ENCODE measurements at regions of chr2 and their contacts with region 1.

Region 1: GRCh38 chr2:222973237-222973636 is 78.8 kb upstream of the KCNE4 start:
- DNase-seq: no peak
- ATAC-seq: no peak
- H3K4me3 ChIP-seq: no peak overlapping the region
- H3K27ac ChIP-seq: peak overlapping the region in 1 of 2 experiments; percentile 27; a peak in 1 of 6 replicates
- H3K4me1 ChIP-seq: no peaks in the 10 kb centered on the region
- CTCF ChIP-seq: no peak
- EP300 ChIP-seq: no peak
- POLR2A ChIP-seq: no peak
- RAD21 ChIP-seq: no peak

Region 2: DNA sequence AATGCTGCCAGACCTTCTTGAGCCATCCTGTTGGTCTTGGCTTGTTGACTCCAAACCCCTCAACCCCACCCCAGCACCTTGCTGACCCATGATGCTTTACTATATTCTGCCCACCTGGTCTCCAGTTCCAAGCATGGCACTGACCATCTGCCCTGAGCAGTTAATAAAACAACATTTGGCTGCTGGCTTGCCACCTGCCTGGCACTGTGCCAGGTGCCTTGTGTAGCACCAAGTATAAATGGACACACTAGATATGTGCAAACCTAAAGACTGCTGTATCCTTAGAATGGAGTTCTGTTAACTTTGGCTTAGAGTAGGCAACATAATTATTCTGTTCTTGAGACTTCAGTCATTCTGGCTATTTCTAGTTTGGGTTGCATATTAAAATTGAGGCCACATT is 21.0 kb before region 1 on chr2:
- CTCF ChIA-PET with region 1: interaction called, 10 read pairs
- POLR2A ChIA-PET with region 1: no interaction called
- DNase-seq: no peak
- ATAC-seq: no peak
- H3K4me3 ChIP-seq: no peak overlapping the region
- H3K27ac ChIP-seq: no peak overlapping the region
- H3K4me1 ChIP-seq: no peaks in the 10 kb centered on the region
- CTCF ChIP-seq: no peak
- EP300 ChIP-seq: no peak
- POLR2A ChIP-seq: no peak
- RAD21 ChIP-seq: no peak

Region 3: DNA sequence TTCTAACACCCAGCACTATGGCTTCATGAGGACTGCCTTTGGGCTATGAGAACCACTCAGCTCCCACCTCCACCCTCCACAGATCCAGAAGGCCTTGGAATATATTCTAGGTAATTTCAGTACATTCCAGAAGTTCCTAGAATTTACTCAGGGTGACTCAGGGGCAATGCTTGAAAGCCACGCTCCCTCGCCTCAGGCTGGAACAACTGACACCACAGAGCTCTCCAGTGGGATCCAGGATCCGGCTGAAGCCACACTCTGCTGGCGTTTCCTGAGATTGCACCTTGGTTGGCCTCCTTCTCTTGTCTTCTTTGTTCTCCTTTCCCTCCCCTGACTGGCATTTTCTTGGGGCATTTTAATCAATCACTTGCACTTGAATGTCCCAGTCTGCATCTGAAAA is 13.9 kb before region 1 on chr2:
- CTCF ChIA-PET with region 1: interaction called, 21 read pairs
- POLR2A ChIA-PET with region 1: no interaction called
- DNase-seq: peak; percentile 40 to 57
- ATAC-seq: peak; percentile 96 to 97
- H3K4me3 ChIP-seq: no peak overlapping the region
- H3K27ac ChIP-seq: peak overlapping the region; percentile 42 to 58; a peak in 3 of 6 replicates
- H3K4me1 ChIP-seq: peaks cover 12% of the 10 kb centered on the region
- CTCF ChIP-seq: no peak
- EP300 ChIP-seq: no peak
- POLR2A ChIP-seq: no peak
- RAD21 ChIP-seq: peak in 1 of 2 experiments; percentile 31; a peak in 3 of 5 replicates

Region 4: DNA sequence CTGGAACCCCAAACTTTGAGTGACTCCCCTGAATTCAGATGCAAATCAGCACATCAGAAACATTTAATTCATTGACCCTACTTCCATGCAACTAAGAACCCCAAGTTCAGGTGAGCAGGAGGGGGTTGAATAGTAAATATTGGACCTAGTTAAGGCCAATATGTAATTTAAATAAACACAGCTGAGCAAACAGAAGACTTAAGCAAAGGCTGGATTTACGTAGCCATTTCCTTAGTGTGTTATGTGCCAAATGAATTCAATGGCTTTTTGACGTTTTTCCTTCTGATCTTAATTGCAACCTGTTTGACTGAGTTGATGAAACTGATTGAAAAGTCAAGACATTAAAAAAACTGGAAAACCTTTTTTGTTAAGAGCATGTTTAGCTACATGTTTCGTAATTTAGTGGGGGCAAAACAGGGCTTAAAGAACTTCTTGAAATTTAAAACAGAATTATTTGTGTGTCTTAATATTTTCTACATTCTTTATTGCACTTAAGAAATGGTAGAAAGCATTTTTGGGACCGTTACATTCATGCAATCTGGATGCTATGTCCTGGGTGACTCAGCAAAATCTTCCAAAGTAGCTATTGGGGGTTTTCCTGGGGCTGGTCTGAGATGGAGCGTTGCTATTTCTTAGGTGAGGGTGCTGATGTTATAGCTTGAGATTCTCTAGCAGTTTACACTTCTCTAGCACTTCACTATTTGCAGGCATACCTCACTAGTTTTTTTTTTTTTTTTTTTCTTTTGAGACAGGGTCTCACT is 53.3 kb after region 1 on chr2:
- CTCF ChIA-PET with region 1: interaction called, 12 read pairs
- POLR2A ChIA-PET with region 1: no interaction called
- DNase-seq: peak; percentile 25 to 54
- ATAC-seq: peak; percentile 62 to 70; a peak in 5 of 6 replicates
- H3K4me3 ChIP-seq: no peak overlapping the region
- H3K27ac ChIP-seq: peak overlapping the region; percentile 76 to 86
- H3K4me1 ChIP-seq: peaks cover 28% of the 10 kb centered on the region
- CTCF ChIP-seq: no peak
- EP300 ChIP-seq: peak; percentile 60 to 74; a peak in 2 of 5 replicates
- POLR2A ChIP-seq: no peak
- RAD21 ChIP-seq: no peak

Region 5: GRCh38 chr2:223051693-223052289 is 78.6 kb after region 1 on chr2 and contains the start of gene KCNE4:
- CTCF ChIA-PET with region 1: interaction called, 14 read pairs
- POLR2A ChIA-PET with region 1: no interaction called
- DNase-seq: no peak
- ATAC-seq: peak in 1 of 2 experiments; percentile 53; a peak in 3 of 6 replicates
- H3K4me3 ChIP-seq: peak within 1 kb of the TSS; percentile 43
- H3K27ac ChIP-seq: peak within 1 kb of the TSS; percentile 62 to 82
- H3K4me1 ChIP-seq: peaks cover 30% of the 10 kb centered on the region
- CTCF ChIP-seq: no peak
- EP300 ChIP-seq: no peak
- POLR2A ChIP-seq: no peak
- RAD21 ChIP-seq: no peak
- polyA plus RNA-seq, gene KCNE4: 3.6 and 4.1 TPM in 2 replicates

Region 6: DNA sequence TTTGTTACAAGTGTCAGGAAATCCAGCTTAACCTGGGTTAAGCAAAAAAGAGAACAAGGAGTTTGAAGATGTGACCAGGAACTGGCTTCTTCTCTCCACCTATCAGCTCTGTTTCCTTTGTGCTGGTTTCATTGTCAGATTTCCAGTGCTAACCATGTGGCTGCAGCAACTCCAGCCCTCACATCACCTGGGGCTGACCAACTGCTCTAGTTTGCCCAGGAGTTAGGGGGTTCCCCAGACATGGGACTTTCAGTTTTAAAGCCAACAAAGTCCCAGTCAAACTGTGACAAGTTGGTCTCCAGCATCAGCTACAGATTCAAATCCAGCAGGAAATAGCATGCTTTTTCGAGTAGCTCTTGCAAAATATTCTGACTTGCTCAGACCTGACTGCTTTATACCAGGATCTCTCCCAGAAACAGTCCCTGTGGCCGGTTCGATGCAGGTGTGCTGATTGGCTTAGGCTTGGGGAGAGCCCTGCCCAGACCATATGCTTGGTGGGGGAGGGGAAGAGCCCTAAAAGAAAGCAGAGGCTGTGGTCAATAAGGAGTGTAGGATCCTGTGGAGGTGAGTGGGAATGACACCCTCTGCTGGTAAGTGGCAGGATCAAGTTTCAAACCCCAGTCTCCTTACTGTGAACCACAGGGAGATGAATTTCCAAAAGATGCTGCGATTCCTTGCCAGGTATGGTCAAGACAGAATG is 128.3 kb after region 1 on chr2:
- CTCF ChIA-PET with region 1: interaction called, 86 read pairs
- POLR2A ChIA-PET with region 1: no interaction called
- DNase-seq: peak; percentile 52 to 63
- ATAC-seq: peak; percentile 90 to 97
- H3K4me3 ChIP-seq: no peak overlapping the region
- H3K27ac ChIP-seq: peak overlapping the region; percentile 34 to 40; a peak in 5 of 6 replicates
- H3K4me1 ChIP-seq: no peaks in the 10 kb centered on the region; the same call in 2 of the 3 replicates
- CTCF ChIP-seq: peak; percentile 68
- EP300 ChIP-seq: no peak
- POLR2A ChIP-seq: no peak
- RAD21 ChIP-seq: peak; percentile 73 to 78

Region 7: DNA sequence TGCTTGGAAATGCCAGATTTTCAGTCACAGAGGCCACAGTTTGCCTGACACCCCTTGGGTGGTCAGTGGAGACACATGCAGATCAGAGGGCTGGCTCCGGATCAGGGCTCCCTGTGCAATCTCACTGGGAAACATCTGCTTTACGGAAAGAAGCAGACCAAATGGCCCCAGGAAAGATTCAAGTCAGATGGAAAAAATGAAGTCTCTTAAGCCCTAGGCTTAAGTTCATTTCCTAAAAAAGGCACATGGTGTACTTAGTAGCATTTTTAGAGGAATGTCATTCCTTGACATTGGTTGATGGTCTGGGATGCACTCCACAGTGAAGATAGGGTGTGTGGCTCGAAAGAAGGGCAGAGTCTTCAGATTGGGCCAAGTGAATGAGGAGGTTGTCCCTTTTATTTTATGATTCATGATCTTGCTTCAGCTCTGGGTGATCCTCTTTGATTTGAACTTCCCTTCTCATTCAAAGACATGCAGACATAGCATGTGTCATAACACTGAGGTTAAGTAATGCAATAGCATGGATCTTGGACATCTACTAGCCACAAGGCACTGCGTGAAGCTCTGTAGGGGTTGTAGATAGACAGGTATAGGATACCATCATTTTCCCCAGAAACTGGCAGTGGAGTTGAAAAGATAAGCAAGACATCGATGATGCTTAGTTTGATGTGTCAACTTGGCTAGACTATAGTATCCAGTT is 135.3 kb after region 1 on chr2:
- CTCF ChIA-PET with region 1: interaction called, 86 read pairs
- POLR2A ChIA-PET with region 1: no interaction called
- DNase-seq: no peak
- ATAC-seq: no peak
- H3K4me3 ChIP-seq: no peak overlapping the region
- H3K27ac ChIP-seq: no peak overlapping the region
- H3K4me1 ChIP-seq: no peaks in the 10 kb centered on the region
- CTCF ChIP-seq: no peak
- EP300 ChIP-seq: no peak
- POLR2A ChIP-seq: no peak
- RAD21 ChIP-seq: no peak